ENCODE measurements at regions of chr12 and their contacts with region 1.

Region 1: GRCh38 chr12:51531978-51532497 is 59.0 kb upstream of the SCN8A start:
- DNase-seq: peak; percentile 77
- H3K4me3 Mint-ChIP-seq: no peak overlapping the region
- H3K27ac Mint-ChIP-seq: no peak overlapping the region
- H3K4me1 Mint-ChIP-seq: peaks cover 6% of the 10 kb centered on the region
- H3K27me3 Mint-ChIP-seq: peaks cover 32% of the 10 kb centered on the region

Region 2: DNA sequence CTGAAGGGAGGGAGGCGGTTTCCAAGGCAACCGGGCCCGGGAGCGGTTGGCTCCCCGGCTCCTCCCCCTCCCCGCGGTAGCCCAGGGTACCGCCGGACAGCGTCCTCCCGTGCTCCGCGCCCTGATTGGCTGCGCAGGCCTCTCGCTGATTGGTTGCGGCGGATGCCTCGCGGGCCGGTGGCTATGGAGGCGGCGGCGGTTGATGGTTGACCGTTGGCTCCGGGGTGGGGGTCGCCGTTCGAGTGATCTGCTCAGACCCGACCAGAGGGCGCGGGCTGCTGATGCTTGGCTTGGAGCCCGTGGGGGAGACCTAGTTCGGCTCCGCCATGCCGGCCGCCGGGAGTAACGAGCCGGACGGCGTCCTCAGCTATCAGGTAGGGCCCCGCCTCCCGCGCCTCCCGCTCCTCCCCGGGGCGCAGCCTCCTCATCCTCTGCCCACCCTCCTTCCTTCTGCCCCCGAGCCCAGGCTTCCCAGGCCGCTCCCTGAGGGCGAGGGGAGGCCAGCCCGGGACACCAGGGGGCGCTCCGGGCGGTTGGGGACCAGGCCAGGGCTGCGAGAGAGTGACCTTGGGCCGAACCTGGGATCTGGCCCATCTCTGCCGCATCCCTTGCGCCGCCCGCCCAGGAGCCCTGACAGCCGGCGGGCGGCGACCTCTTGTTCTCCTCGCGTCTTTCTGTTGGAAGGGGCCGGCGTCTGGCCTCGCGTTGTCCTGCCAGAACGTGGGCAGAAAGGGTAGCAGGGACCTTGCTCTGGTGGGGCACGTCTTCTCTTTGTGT is 107.2 kb before region 1 on chr12 and contains the start of gene SLC4A8:
- CTCF ChIA-PET with region 1: interaction called, 192 read pairs
- POLR2A ChIA-PET with region 1: interaction called, 7 read pairs
- DNase-seq: peak; percentile 84
- H3K4me3 Mint-ChIP-seq: peak within 1 kb of the TSS; percentile 71
- H3K27ac Mint-ChIP-seq: no peak within 1 kb of the TSS
- H3K4me1 Mint-ChIP-seq: peaks cover 15% of the 10 kb centered on the region
- H3K27me3 Mint-ChIP-seq: peaks cover 3% of the 10 kb centered on the region
- total RNA-seq, gene SLC4A8: 5.2 to 5.4 TPM

Region 3: DNA sequence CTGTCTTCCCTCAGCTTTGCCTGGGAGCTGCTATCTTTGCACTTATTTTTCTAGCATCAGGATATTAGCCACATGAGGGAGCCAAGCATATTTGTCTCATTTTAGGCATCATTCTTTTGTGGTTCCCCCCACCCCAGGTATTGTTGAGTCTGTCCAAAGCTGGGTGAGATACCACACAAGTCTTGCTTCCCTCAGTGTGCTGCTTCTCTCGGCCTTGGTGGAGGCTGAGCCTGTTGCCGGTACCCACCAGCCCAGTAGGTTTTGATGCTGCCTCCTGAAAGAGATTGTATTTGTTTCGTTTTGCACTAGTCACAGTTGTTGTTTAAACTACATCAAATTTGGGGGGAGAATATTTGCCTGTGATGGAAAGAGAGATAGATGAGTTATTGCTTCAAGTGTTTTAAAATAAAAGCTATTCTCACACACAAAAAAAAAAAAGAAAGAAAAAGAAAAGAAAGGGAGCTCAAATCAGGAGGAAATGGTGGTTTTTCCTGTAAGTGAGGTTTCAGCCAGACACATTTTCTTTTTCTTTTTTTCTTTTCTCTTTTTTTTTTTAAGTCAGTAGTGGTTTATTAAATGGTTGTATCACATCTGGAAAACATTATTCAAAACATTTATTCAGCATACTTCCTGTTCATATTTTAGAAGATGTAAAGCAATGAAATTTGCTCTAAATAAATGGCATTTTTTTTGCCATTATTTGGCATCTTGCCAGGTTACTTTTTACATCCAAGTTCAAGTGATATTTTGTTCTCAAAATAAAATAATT is 48.9 kb before region 1 on chr12:
- CTCF ChIA-PET with region 1: interaction called, 16 read pairs
- POLR2A ChIA-PET with region 1: no interaction called
- DNase-seq: peak; percentile 61
- H3K4me3 Mint-ChIP-seq: peak overlapping the region; percentile 72
- H3K27ac Mint-ChIP-seq: peak overlapping the region; percentile 96
- H3K4me1 Mint-ChIP-seq: peaks cover 35% of the 10 kb centered on the region
- H3K27me3 Mint-ChIP-seq: no peaks in the 10 kb centered on the region

Region 4: DNA sequence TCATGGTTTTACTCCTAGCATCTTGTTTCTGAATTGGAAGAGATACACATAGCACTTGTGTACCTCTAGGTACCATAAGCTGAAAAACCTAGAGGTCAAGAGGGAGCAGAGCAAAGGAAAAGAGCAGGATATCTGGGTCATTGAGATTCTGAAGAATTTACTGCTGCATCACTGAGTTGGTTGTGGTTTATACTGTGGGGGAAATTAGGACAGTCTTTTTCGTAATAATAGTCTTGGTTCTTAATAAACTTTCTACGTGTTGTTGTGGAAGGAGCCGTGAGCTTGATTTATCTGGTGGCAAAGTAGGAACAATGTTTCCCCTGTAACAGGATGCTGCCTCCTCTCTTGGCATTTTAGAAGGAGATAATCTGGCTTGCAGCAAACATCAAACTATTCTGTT is 27.2 kb before region 1 on chr12:
- CTCF ChIA-PET with region 1: no interaction called
- POLR2A ChIA-PET with region 1: no interaction called
- DNase-seq: no peak
- H3K4me3 Mint-ChIP-seq: no peak overlapping the region
- H3K27ac Mint-ChIP-seq: no peak overlapping the region
- H3K4me1 Mint-ChIP-seq: no peaks in the 10 kb centered on the region
- H3K27me3 Mint-ChIP-seq: peaks cover 2% of the 10 kb centered on the region

Region 5: GRCh38 chr12:51521554-51522276 is 10.3 kb before region 1 on chr12:
- CTCF ChIA-PET with region 1: interaction called, 19 read pairs
- POLR2A ChIA-PET with region 1: no interaction called
- DNase-seq: no peak
- H3K4me3 Mint-ChIP-seq: no peak overlapping the region
- H3K27ac Mint-ChIP-seq: no peak overlapping the region
- H3K4me1 Mint-ChIP-seq: no peaks in the 10 kb centered on the region
- H3K27me3 Mint-ChIP-seq: peaks cover 3% of the 10 kb centered on the region

Region 6: DNA sequence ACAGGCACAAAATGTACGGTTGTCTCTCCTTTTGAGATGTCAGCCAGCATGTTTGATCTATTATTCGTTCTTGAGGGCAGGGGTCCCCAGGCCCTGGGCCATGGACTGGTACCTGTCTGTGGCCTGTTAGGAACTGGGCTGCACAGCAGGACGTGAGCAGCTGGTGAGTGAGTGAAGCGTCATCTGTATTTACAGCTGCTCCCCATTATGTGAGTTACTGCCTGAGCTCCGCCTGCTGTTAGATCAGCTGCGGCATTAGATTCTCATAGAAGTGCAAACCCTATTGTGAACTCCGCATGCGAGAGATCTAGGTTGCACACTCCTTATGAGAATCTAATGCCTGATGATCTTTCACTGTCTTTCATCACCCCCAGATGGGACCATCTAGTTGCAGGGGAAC is 17.6 kb after region 1 on chr12:
- CTCF ChIA-PET with region 1: no interaction called
- POLR2A ChIA-PET with region 1: no interaction called
- DNase-seq: no peak
- H3K4me3 Mint-ChIP-seq: no peak overlapping the region
- H3K27ac Mint-ChIP-seq: no peak overlapping the region
- H3K4me1 Mint-ChIP-seq: no peaks in the 10 kb centered on the region
- H3K27me3 Mint-ChIP-seq: peaks cover 32% of the 10 kb centered on the region

Region 7: DNA sequence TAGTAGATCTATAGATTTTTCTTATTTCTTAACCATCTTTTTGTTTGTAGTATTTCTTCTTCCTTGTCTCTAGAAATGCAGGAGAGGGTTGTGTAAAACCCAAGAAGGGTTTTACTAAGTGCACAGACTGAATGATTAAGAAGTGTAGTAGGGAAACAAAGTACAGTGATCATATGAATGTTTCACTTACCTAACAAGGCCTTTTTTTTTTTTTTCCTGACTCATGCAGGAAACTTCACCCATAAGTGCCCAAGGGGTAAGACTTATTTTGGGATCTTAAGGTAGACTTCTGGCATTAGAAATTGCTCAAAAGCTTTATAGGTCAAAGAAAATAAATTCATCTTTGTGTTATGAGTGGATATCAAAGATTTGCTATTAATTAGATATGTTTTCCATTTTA is 69.2 kb after region 1 on chr12:
- CTCF ChIA-PET with region 1: no interaction called
- POLR2A ChIA-PET with region 1: no interaction called
- DNase-seq: no peak
- H3K4me3 Mint-ChIP-seq: no peak overlapping the region
- H3K27ac Mint-ChIP-seq: no peak overlapping the region
- H3K4me1 Mint-ChIP-seq: no peaks in the 10 kb centered on the region
- H3K27me3 Mint-ChIP-seq: peaks cover 58% of the 10 kb centered on the region

Measured in activated CD4-positive, alpha-beta memory T cell treated with anti-CD3 and anti-CD28 coated beads, Interleukin-2, amount 10 ng/mL, durations not matched to agents 7 days and 5 days (primary cell).